T-cell (primary cell): ENCODE measurements at regions of chr12 and their contacts with region 1.

Region 1: GRCh38 chr12:27305673-27306456 is 26.8 kb upstream of the BMAL2 start:
- DNase-seq: peak in 1 of 35 experiments; percentile 61
- ATAC-seq: peak in 1 of 4 experiments; percentile 42
- H3K4me3 ChIP-seq: no peak overlapping the region
- H3K4me3 Mint-ChIP-seq: no peak overlapping the region
- H3K27ac ChIP-seq: no peak overlapping the region
- H3K27ac Mint-ChIP-seq: peak overlapping the region; percentile 29 to 45
- H3K4me1 ChIP-seq: no peaks in the 10 kb centered on the region
- H3K4me1 Mint-ChIP-seq: no peaks in the 10 kb centered on the region
- H3K27me3 ChIP-seq: no peaks in the 10 kb centered on the region
- H3K27me3 Mint-ChIP-seq: no peaks in the 10 kb centered on the region

Region 2: GRCh38 chr12:26832822-26833742 is 472.8 kb before region 1 on chr12 and contains the start of gene ITPR2:
- CTCF ChIA-PET with region 1: interaction called in 1 of 2 experiments, 10 read pairs
- POLR2A ChIA-PET with region 1: no interaction called
- DNase-seq: peak; percentile 80 to 95 (median 88)
- ATAC-seq: peak; percentile 92 to 95 (median 92)
- H3K4me3 ChIP-seq: peak within 1 kb of the TSS; percentile 95 to 98
- H3K4me3 Mint-ChIP-seq: peak within 1 kb of the TSS; percentile 95 to 97 (median 97)
- H3K27ac ChIP-seq: peak within 1 kb of the TSS; percentile 91
- H3K27ac Mint-ChIP-seq: peak within 1 kb of the TSS; percentile 98 to 99
- H3K4me1 ChIP-seq: peaks cover 16 to 21% of the 10 kb centered on the region in 2 experiments
- H3K4me1 Mint-ChIP-seq: peaks cover 43 to 46% (median 45%) of the 10 kb centered on the region in 3 donors
- H3K27me3 ChIP-seq: no peaks in the 10 kb centered on the region
- H3K27me3 Mint-ChIP-seq: no peaks in the 10 kb centered on the region
- total RNA-seq, gene ITPR2: 38.8 to 52.5 (median 44.5) TPM

Region 3: GRCh38 chr12:27104546-27104945 is 201.3 kb before region 1 on chr12:
- CTCF ChIA-PET with region 1: no interaction called
- POLR2A ChIA-PET with region 1: no interaction called
- DNase-seq: no peak
- ATAC-seq: no peak
- H3K4me3 ChIP-seq: no peak overlapping the region
- H3K4me3 Mint-ChIP-seq: no peak overlapping the region
- H3K27ac ChIP-seq: no peak overlapping the region
- H3K27ac Mint-ChIP-seq: no peak overlapping the region
- H3K4me1 ChIP-seq: no peaks in the 10 kb centered on the region
- H3K4me1 Mint-ChIP-seq: no peaks in the 10 kb centered on the region
- H3K27me3 ChIP-seq: no peaks in the 10 kb centered on the region
- H3K27me3 Mint-ChIP-seq: no peaks in the 10 kb centered on the region

Region 4: DNA sequence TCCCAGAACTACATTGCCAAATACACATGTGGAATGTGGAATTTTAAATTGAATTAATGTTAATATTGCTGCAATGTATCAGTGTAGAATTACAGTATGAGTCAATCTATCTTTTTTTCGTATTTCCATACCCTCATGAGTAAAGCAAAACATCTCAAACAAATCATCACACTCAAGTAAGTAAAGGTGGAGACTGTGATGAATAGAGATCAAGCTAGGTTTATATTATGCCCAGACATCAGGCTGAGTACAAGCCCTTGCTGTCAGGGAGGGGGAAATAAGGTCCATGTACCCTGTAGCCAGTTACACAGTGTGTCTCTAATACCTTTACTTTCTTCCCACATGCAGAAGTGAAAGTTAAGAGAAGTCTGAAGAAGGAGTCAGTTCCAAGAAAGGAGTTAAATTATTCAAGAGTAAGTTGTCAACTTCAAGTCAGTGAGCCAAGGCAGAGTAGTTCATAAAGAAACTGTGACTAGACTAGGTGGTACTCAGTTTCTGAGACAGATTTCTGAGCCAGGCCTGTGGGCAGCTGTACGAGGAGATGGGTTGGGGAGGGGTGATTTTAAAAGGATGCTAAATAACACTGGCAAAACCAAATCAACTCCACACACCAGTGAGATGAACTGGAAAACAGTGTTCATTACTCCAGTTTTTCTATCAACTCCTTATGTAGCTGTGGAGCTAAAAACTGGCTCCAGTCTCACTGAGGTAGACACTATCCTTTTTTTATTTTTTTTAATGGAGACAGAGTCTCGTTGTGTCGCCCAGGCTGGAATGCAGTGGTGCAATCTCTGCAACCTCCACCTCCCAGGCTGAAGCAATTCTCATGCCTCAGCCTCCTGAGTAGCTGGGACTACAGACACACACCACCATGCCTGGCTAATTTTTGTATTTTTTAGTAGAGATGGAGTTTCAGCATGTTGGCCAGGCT is 85.5 kb before region 1 on chr12:
- CTCF ChIA-PET with region 1: no interaction called
- POLR2A ChIA-PET with region 1: no interaction called
- DNase-seq: no peak
- ATAC-seq: no peak
- H3K4me3 ChIP-seq: no peak overlapping the region
- H3K4me3 Mint-ChIP-seq: no peak overlapping the region
- H3K27ac ChIP-seq: no peak overlapping the region
- H3K27ac Mint-ChIP-seq: no peak overlapping the region
- H3K4me1 ChIP-seq: no peaks in the 10 kb centered on the region
- H3K4me1 Mint-ChIP-seq: peaks cover 0 to 5% (median 0%) of the 10 kb centered on the region in 3 donors
- H3K27me3 ChIP-seq: peaks cover 0 to 3% of the 10 kb centered on the region in 2 experiments
- H3K27me3 Mint-ChIP-seq: no peaks in the 10 kb centered on the region

Region 5: GRCh38 chr12:27243804-27244683 is 61.8 kb before region 1 on chr12 and contains the start of gene STK38L:
- CTCF ChIA-PET with region 1: interaction called in 1 of 2 experiments, 11 read pairs
- POLR2A ChIA-PET with region 1: no interaction called
- DNase-seq: peak; percentile 92 to 99 (median 95)
- ATAC-seq: peak; percentile 94 to 98 (median 96)
- H3K4me3 ChIP-seq: peak within 1 kb of the TSS; percentile 87 to 97
- H3K4me3 Mint-ChIP-seq: peak within 1 kb of the TSS; percentile 96 to 99 (median 98)
- H3K27ac ChIP-seq: peak within 1 kb of the TSS; percentile 90
- H3K27ac Mint-ChIP-seq: peak within 1 kb of the TSS; percentile 92 to 94
- H3K4me1 ChIP-seq: peaks cover 8 to 12% of the 10 kb centered on the region in 2 experiments
- H3K4me1 Mint-ChIP-seq: peaks cover 45 to 56% (median 50%) of the 10 kb centered on the region in 3 donors
- H3K27me3 ChIP-seq: no peaks in the 10 kb centered on the region
- H3K27me3 Mint-ChIP-seq: no peaks in the 10 kb centered on the region
- total RNA-seq, gene STK38L: 13.5 to 19.6 (median 18.3) TPM

Region 6: GRCh38 chr12:27359578-27360340 is 53.9 kb after region 1 on chr12:
- CTCF ChIA-PET with region 1: no interaction called
- POLR2A ChIA-PET with region 1: no interaction called
- DNase-seq: no peak
- ATAC-seq: no peak
- H3K4me3 ChIP-seq: no peak overlapping the region
- H3K4me3 Mint-ChIP-seq: no peak overlapping the region
- H3K27ac ChIP-seq: no peak overlapping the region
- H3K27ac Mint-ChIP-seq: no peak overlapping the region
- H3K4me1 ChIP-seq: no peaks in the 10 kb centered on the region
- H3K4me1 Mint-ChIP-seq: no peaks in the 10 kb centered on the region
- H3K27me3 ChIP-seq: no peaks in the 10 kb centered on the region
- H3K27me3 Mint-ChIP-seq: peaks cover 0 to 3% of the 10 kb centered on the region in 2 donors